ENCODE measurements at regions of chr11 and their contacts with region 1.

Region 1: DNA sequence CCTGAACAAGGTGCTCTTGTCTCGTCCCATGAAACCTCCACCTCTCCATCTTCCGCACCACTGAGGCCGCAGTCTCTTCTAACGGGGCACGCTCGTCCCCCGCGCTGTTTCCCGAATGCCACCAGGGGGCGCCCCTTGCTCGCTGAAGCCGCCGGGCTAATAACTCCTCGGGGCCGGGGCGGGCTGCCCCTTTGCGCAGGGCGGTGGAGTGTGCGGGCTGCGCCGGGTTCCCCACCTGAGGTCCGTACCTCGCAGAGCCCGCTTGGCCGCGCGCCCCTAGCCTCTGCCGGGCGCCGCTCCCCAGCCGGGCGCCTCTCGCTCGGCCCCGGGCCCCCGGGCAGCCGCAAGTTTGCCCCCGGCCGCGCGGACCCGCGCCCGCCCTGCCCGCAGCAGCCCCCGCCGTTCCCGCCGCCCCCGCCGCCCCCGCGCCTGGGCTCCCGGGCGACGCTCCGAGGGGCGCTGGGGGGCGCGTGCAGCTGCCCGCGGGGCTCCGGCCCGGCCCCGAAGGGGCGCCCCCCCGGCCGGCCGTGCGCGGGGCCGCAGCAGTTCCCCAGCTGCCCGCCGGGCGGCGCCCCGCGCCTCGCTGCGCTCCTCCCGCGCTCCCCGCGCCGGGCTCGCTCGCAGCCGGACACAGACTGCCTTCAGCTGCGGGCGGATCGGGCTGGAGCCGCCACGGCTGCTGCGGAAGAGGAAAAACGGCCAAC is at the start of gene GRIK4:
- DNase-seq: no peak
- H3K4me3 ChIP-seq: peak within 1 kb of the TSS in 2 of 3 experiments; percentile 13 to 27
- H3K27ac ChIP-seq: no peak within 1 kb of the TSS
- H3K4me1 ChIP-seq: no peaks in the 10 kb centered on the region
- H3K27me3 ChIP-seq: peaks cover 46% of the 10 kb centered on the region
- CTCF ChIP-seq: peak; percentile 74 to 93 (median 92)
- polyA plus RNA-seq, gene GRIK4: not detected in 3 replicates

Region 2: GRCh38 chr11:120929664-120930154 is 418.4 kb after region 1 on chr11:
- dilution Hi-C with region 1: loop called (anchors 25 kb)
- DNase-seq: peak; percentile 32
- H3K4me3 ChIP-seq: no peak overlapping the region
- H3K27ac ChIP-seq: no peak overlapping the region
- H3K4me1 ChIP-seq: no peaks in the 10 kb centered on the region
- H3K27me3 ChIP-seq: no peaks in the 10 kb centered on the region
- CTCF ChIP-seq: peak; percentile 68 to 81 (median 81)